Heart right ventricle (tissue), 16 donors: ENCODE measurements at regions of chr3 and their contacts with region 1.

Region 1: GRCh38 chr3:70824773-70825172 is 512.3 kb upstream of the MDFIC2 start:
- DNase-seq: no peak
- ATAC-seq: no peak
- H3K4me3 ChIP-seq: no peak overlapping the region
- H3K27ac ChIP-seq: no peak overlapping the region
- H3K4me1 ChIP-seq: peaks cover 0 to 14% (median 0%) of the 10 kb centered on the region in 9 donors
- H3K27me3 ChIP-seq: no peaks in the 10 kb centered on the region
- CTCF ChIP-seq: no peak

Region 2: DNA sequence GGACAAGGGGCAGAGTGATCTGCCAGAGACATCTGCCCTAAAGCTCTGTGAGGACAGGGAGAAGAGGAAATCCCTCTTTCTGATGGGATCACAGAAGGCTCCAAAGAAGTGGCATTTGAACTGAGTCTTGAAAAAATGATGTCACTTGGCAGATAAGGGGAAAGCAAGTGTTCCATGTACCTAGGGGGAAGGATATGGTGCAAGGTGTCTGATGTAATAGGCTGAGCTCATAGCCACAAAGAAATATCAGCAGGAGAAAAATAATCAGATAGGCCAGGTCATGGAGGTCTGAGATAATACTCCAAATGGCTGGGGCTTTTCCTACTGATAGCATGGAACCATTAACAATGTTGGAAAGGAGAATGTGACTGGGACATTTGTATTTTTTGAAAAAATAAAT is 44.0 kb before region 1 on chr3:
- intact Hi-C with region 1: loop called in 1 of 10 experiments (anchors 2 kb)
- DNase-seq: no peak
- ATAC-seq: no peak
- H3K4me3 ChIP-seq: no peak overlapping the region
- H3K27ac ChIP-seq: no peak overlapping the region
- H3K4me1 ChIP-seq: no peaks in the 10 kb centered on the region
- H3K27me3 ChIP-seq: no peaks in the 10 kb centered on the region
- CTCF ChIP-seq: no peak

Region 3: GRCh38 chr3:70882104-70882503 is 57.3 kb after region 1 on chr3:
- intact Hi-C with region 1: loop called in 1 of 10 experiments (anchors 1 kb)
- DNase-seq: no peak
- ATAC-seq: no peak
- H3K4me3 ChIP-seq: no peak overlapping the region
- H3K27ac ChIP-seq: no peak overlapping the region
- H3K4me1 ChIP-seq: no peaks in the 10 kb centered on the region
- H3K27me3 ChIP-seq: no peaks in the 10 kb centered on the region
- CTCF ChIP-seq: no peak

Region 4: GRCh38 chr3:71160800-71161546 is 336.2 kb after region 1 on chr3:
- intact Hi-C with region 1: no loop called
- DNase-seq: no peak
- ATAC-seq: no peak
- H3K4me3 ChIP-seq: no peak overlapping the region
- H3K27ac ChIP-seq: no peak overlapping the region
- H3K4me1 ChIP-seq: peaks cover 0 to 12% (median 0%) of the 10 kb centered on the region in 9 donors
- H3K27me3 ChIP-seq: no peaks in the 10 kb centered on the region
- CTCF ChIP-seq: no peak

Region 5: DNA sequence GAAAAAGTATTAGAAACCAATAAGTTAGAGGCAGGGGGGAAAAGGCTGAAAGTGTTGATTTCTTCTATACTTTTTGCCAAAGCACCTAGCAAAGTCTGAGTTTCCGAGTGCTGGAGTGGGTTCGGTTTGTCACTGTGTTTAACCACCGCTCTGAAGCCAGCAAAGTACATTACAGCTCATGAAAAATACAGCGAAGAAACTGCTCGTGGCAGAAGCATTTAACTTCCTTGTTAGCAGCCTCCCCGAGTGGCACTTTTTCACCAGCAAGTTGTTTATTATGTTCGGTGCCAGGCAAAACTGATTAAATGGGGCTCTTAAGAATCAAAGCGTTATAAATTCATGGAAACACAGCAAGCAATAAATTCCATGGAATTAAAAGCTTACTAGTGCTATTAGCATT is 445.1 kb after region 1 on chr3:
- intact Hi-C with region 1: no loop called
- DNase-seq: no peak
- ATAC-seq: no peak
- H3K4me3 ChIP-seq: no peak overlapping the region
- H3K27ac ChIP-seq: no peak overlapping the region
- H3K4me1 ChIP-seq: no peaks in the 10 kb centered on the region
- H3K27me3 ChIP-seq: no peaks in the 10 kb centered on the region
- CTCF ChIP-seq: no peak